ENCODE measurements at regions of chr5 and their contacts with region 1.

Region 1: GRCh38 chr5:65932676-65933075 is 6.3 kb downstream of the ERBIN start:
- DNase-seq: no peak
- ATAC-seq: no peak
- H3K4me3 ChIP-seq: no peak overlapping the region; the same call in 1 of the 2 replicates
- H3K27ac ChIP-seq: no peak overlapping the region
- H3K4me1 ChIP-seq: 0 out of 2 replicates have a peak, but pooled peaks cover 5% of the 10 kb centered on the region
- H3K27me3 ChIP-seq: no peaks in the 10 kb centered on the region
- CTCF ChIP-seq: no peak
- EP300 ChIP-seq: no peak
- POLR2A ChIP-seq: no peak
- RAD21 ChIP-seq: no peak

Region 2: GRCh38 chr5:65970481-65971367 is 38.0 kb after region 1 on chr5:
- CTCF ChIA-PET with region 1: interaction called, 3 read pairs
- POLR2A ChIA-PET with region 1: interaction called, 7 read pairs
- RAD21 ChIA-PET with region 1: interaction called, 4 read pairs
- SMC1A ChIA-PET with region 1: interaction called, 21 read pairs
- in situ Hi-C with region 1: no loop called
- intact Hi-C with region 1: no loop called
- DNase-seq: no peak
- ATAC-seq: peak; percentile 43
- H3K4me3 ChIP-seq: no peak overlapping the region
- H3K27ac ChIP-seq: peak overlapping the region; percentile 45
- H3K4me1 ChIP-seq: peaks cover 10% of the 10 kb centered on the region
- H3K27me3 ChIP-seq: no peaks in the 10 kb centered on the region
- CTCF ChIP-seq: no peak
- EP300 ChIP-seq: no peak
- POLR2A ChIP-seq: no peak
- RAD21 ChIP-seq: no peak